SK-N-SH (cell line): ENCODE measurements at regions of chr2 and their contacts with region 1.

Region 1: DNA sequence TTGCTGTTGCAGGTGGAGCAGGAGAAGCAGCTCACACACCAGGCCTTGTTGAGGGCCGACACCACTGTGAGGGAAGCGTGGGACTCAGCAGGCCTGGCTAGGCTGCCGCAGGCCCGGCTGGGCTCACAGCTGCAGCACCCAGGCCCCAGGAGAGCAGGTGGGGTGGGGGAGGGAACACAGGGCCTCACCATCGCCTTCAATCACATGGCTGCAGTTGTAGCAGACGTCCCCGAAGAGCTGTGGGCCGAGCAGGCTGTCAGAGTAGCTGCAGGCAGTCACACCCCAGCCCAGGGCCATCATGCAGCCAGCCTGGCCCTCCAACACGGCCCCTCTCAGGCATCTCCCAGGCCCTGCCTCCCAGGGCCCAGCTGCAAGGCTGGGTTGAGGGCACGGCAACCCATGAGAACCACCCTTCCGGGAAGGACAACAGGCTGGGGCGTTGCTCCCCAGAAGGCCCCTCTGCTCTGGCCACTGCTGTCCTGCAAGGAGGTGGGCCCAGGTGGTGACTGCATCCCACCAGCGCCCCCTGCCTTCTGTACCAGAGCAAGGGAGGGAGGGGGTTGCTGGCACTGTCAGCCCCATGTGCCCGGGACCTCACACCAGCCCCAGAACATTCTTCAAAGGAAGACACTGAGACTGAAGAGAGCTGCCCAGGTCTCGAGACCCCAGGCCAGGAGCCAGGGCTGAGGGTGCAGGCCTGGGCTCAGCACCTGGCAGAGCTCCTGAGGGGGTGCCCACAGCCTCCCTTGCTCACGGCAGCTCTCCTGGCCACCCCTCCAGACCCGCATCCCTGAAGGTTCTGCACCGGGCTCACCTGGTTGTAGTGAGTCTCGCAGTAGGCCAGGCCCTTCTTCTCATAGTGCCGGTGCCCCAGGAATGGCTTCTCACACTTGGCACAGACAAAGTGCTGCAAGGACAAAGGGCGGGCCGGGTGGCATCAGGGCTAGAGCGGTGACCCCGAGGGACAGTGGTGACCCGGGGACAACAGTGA is 5.6 kb upstream of the GPR17 start:
- DNase-seq: peak; percentile 72
- H3K4me3 ChIP-seq: no peak overlapping the region
- H3K27ac ChIP-seq: no peak overlapping the region
- H3K4me1 ChIP-seq: peaks cover 10 to 30% of the 10 kb centered on the region in 2 experiments; a peak in 3 of 4 replicates
- H3K27me3 ChIP-seq: no peaks in the 10 kb centered on the region
- CTCF ChIP-seq: peak; percentile 38
- EP300 ChIP-seq: no peak
- RAD21 ChIP-seq: peak; percentile 22; the same call in 1 of the 2 replicates

Region 2: DNA sequence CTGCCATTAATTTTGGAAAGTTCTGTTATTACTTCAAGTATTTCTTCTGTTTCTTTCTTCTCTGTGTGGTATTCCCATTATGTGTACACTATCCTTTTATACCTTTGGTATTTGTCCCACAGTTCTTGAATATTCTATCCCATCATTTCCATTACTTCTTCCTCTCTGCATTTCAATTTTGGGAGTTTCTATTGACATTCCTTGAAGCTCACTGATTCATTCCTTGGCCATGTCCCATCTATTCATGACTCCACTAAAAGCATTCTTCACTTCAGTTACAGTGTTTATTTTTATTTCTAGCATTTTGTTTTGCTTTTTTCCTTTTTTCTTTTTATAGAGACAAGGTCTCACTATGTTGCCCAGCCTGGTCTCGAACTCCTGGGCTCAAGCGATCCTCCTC is 191.9 kb before region 1 on chr2:
- CTCF ChIA-PET with region 1: no interaction called
- POLR2A ChIA-PET with region 1: no interaction called
- DNase-seq: no peak
- H3K4me3 ChIP-seq: no peak overlapping the region
- H3K27ac ChIP-seq: no peak overlapping the region
- H3K4me1 ChIP-seq: no peaks in the 10 kb centered on the region; a peak in 1 of 4 replicates
- H3K27me3 ChIP-seq: no peaks in the 10 kb centered on the region
- CTCF ChIP-seq: no peak
- EP300 ChIP-seq: no peak
- RAD21 ChIP-seq: no peak

Region 3: GRCh38 chr2:127675331-127676261 is 35.2 kb after region 1 on chr2 and contains the start of gene LIMS2:
- CTCF ChIA-PET with region 1: interaction called, 13 read pairs
- POLR2A ChIA-PET with region 1: no interaction called
- DNase-seq: peak; percentile 85
- H3K4me3 ChIP-seq: peak within 1 kb of the TSS; percentile 58 to 85
- H3K27ac ChIP-seq: no peak within 1 kb of the TSS
- H3K4me1 ChIP-seq: peaks cover 0 to 6% of the 10 kb centered on the region in 2 experiments; a peak in 1 of 4 replicates
- H3K27me3 ChIP-seq: peaks cover 14% of the 10 kb centered on the region; the same call in 1 of the 2 replicates
- CTCF ChIP-seq: 0 out of 2 replicates have a peak, but pooled peaks have one; percentile 16
- EP300 ChIP-seq: no peak
- RAD21 ChIP-seq: peak; percentile 57
- polyA plus RNA-seq, gene LIMS2: 2.2 and 2.7 TPM in 2 replicates